HEK293T (cell line): ENCODE measurements at regions of chr2 and their contacts with region 1.

Region 1: GRCh38 chr2:218691234-218691633 is 19.3 kb downstream of the STK36 start:
- DNase-seq: no peak

Region 2: DNA sequence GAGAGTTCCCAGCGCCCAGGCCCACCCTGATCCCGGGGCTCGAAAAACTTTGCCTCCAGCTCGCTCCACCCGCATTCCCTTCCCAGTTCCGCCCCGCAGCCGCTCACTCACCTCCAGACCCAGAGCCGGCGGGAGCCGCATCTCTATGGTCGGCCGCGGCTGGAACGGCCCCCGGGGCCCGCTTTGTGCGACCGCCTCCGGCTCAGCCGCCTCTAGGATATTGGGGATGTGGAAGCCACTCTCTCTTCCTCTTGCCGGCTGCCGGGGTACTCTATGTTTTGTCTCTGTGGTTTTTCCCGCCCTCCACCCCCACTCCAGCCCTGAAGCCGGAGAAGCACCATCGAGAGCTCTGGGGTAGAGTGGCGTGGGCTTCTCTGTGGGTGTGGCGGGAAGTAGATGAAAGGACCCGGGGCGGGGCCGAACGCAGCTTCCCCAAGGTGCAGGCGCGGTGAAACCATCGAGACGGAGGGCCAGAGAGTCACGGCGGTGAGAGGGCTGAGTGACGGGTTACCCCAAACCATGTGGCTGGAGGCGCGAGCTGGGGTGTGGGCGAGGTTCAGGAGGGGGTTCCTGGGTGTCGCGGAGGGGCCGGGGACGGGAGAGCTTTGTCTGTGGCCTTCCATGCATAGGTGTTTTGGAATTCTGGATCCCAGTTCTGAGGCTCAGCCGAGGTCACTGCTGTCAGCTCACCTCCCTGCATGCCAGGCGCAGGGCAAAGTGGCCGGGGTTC is 31.8 kb before region 1 on chr2 and contains the starts of genes BCS1L and ZNF142:
- CTCF ChIA-PET with region 1: interaction called, 7 read pairs
- POLR2A ChIA-PET with region 1: interaction called, 20 read pairs
- DNase-seq: peak; percentile 90

Region 3: DNA sequence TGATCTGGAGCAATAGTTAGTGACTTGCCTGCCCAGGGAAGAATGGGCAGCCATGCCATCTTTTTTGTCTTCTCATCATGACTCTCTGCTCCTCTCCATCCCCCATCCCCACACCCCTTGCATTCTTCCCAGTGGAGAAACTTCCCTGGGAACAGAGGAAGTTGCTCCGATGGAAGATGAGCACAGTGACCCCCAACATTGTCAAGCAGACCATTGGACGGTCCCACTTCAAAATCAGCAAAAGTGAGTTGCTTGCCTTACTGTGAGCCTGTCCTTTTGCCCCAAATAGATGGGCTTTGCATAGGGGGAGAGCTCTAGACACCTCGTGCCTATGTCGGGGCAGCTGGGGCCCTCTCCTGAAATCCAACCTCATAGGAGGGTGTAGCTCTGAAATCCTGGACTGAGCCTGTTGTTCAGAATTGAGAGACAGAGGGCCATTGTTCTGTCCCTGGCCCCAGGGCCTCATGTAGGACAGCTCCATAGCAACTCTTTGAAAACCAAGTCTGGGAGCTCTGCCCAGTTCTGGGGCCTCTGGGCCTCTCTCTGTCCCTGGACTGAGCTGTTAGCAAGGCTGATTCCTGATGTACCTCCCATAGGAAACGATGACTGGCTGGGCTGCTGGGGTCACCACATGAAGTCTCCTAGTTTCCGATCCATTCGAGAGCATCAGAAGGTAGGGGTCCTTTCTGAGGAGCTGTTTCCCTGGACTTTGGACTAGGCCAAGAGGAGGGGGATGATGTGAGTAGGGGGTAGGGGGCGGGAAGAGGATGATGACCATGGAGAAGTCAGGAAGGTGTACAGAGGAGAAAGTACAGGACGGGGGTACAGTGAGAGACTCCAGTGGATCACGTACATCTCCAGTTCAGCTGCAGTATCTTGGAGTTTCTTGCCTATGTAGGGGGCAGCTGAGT is 54.6 kb after region 1 on chr2:
- CTCF ChIA-PET with region 1: no interaction called
- POLR2A ChIA-PET with region 1: no interaction called
- DNase-seq: no peak

Region 4: GRCh38 chr2:218852911-218853667 is 161.9 kb after region 1 on chr2:
- CTCF ChIA-PET with region 1: interaction called, 15 read pairs
- POLR2A ChIA-PET with region 1: no interaction called
- DNase-seq: peak; percentile 66